Heart left ventricle (tissue), 16 donors: ENCODE measurements at regions of chr14 and their contacts with region 1.

Region 1: DNA sequence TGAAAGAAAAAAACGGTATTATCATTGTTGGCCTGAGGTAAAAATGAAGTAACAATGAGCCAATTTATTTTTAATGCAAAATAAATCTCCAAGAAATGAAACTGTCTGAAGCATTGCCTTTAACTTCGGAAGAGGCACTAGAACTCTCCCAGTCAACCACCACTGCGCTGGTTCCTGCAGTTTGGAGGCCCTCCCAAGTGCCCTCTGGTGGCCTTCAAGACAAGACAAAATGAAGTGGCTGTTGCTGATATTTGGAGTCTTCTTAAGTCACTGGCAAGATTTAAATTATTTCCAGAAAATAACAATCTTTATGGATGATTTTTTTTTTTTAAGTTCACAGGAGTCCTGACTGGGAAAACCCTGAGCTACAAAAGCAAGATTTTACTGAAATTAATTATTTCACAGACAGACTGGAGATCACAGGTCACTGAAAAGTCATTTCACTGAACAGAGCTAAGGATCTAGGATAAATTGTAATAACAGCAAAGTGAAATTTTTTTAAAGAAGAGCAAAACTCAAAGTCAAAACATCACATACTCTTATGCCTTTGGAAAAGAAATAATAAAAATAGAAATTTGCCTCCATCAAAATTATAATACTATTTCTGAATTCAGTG is 58.2 kb downstream of the DICER1 start:
- DNase-seq: peak in 4 of 5 donors; percentile 53 to 77 (median 61)
- ATAC-seq: peak in 3 of 4 donors; percentile 82 to 85 (median 83)
- H3K4me3 ChIP-seq: no peak overlapping the region
- H3K27ac ChIP-seq: no peak overlapping the region
- H3K4me1 ChIP-seq: peaks cover 0 to 52% (median 12%) of the 10 kb centered on the region in 12 donors
- H3K27me3 ChIP-seq: no peaks in the 10 kb centered on the region
- CTCF ChIP-seq: peak; percentile 54 to 84 (median 70)
- POLR2A ChIP-seq: no peak

Region 2: DNA sequence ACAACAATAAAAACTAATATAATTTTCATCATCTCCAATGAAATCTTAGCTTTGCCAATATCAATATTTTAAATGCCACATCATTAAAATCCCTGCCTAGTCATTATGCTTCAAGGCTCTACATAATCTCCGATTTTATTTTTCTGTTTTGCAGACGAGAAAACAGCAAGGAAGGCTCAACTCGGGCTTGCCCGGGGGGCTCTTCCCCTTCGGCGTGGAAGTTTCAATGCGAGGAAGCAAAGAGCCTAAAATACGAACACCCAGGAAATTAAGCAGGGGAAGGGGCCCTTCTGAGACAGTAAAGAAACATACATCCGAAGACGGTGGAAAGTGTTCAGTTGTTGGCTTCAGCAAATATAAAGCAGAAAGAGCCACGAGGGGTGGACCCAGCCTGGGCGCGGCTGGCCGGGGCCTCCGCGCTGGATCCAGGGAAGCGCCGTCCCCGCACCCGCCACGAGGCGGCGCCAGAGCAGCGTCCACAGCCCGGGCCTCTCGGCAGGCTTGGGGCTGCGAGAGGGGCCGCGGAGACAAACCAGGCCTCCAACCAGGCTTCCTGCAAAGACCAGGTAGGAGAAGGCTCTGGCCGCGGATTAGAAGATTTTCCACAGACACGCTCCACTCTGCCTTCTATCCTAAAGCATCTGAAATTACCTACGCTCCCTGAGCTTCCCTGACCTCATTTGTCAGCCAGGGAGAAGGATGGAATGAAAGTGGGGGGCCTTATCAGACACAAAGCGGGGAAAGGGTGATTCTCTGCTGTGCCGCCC is 409.7 kb before region 1 on chr14:
- intact Hi-C with region 1: loop called in 9 of 10 experiments (anchors 1 to 5 kb)
- DNase-seq: peak; percentile 54 to 80 (median 64)
- ATAC-seq: peak; percentile 81 to 98 (median 88)
- H3K4me3 ChIP-seq: peak overlapping the region in 5 of 12 donors; percentile 0 to 43 (median 7)
- H3K27ac ChIP-seq: no peak overlapping the region
- H3K4me1 ChIP-seq: peaks cover 0 to 8% (median 0%) of the 10 kb centered on the region in 12 donors
- H3K27me3 ChIP-seq: peaks cover 0 to 12% (median 5%) of the 10 kb centered on the region in 9 donors
- CTCF ChIP-seq: peak; percentile 89 to 99 (median 96)
- POLR2A ChIP-seq: no peak

Region 3: DNA sequence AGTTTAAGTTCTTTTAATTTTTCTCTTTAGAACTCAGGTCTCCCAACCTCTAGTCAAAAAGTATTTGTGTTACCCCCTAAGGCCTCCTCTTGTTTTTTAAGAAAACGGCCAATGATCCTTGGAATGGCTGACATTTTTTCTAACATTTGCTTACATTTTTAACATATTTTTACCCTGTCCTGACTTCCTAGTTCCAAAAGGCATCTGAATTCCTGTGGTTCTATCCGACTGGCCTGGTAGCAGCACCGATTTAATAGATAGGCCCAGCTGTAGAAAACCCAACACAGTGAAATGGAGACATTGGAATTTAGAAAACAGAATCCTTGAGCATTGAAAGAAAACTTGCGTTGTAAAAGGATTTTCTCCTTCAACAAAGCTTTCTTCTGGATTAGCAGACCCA is 194.5 kb before region 1 on chr14:
- intact Hi-C with region 1: loop called in 1 of 10 experiments (anchors 10 kb)
- DNase-seq: no peak
- ATAC-seq: no peak
- H3K4me3 ChIP-seq: no peak overlapping the region
- H3K27ac ChIP-seq: no peak overlapping the region
- H3K4me1 ChIP-seq: no peaks in the 10 kb centered on the region
- H3K27me3 ChIP-seq: peaks cover 0 to 9% (median 0%) of the 10 kb centered on the region in 9 donors
- CTCF ChIP-seq: no peak
- POLR2A ChIP-seq: no peak

Region 4: GRCh38 chr14:95196290-95196689 is 97.2 kb after region 1 on chr14:
- intact Hi-C with region 1: loop called in 3 of 10 experiments (anchors 5 to 10 kb)
- DNase-seq: no peak
- ATAC-seq: no peak
- H3K4me3 ChIP-seq: no peak overlapping the region
- H3K27ac ChIP-seq: no peak overlapping the region
- H3K4me1 ChIP-seq: peaks cover 0 to 12% (median 0%) of the 10 kb centered on the region in 12 donors
- H3K27me3 ChIP-seq: peaks cover 0 to 26% (median 0%) of the 10 kb centered on the region in 9 donors
- CTCF ChIP-seq: peak in 11 of 12 donors; percentile 15 to 57 (median 34)
- POLR2A ChIP-seq: no peak

Region 5: DNA sequence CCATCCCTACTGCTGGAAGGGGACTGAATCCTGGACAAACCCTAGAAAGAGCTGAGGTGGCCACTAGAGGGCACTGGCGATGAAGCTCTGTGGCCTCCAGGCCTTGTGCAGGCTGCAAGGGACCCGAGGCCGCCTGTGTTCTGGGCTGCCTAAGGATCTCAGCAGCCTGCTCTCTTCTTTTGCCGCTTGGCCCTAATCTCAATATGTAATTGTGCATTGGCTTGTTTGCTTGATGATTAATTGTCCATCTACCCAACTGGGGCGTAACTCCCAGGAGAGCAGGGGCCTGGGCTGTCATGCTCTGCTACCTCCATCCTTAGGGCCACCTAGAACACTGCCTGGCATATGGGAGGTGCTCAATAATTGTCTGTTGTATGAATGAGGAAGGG is 343.5 kb after region 1 on chr14:
- intact Hi-C with region 1: loop called in 4 of 10 experiments (anchors 5 to 10 kb)
- DNase-seq: peak; percentile 76 to 84 (median 83)
- ATAC-seq: peak; percentile 90 to 98 (median 94)
- H3K4me3 ChIP-seq: no peak overlapping the region
- H3K27ac ChIP-seq: no peak overlapping the region
- H3K4me1 ChIP-seq: peaks cover 0 to 5% (median 0%) of the 10 kb centered on the region in 12 donors
- H3K27me3 ChIP-seq: no peaks in the 10 kb centered on the region
- CTCF ChIP-seq: peak; percentile 79 to 95 (median 86)
- POLR2A ChIP-seq: no peak